Tibial artery (tissue), 4 donors: ENCODE measurements at regions of chr12 and their contacts with region 1.

Region 1: GRCh38 chr12:7583571-7583970 is 80.0 kb upstream of the CD163 start:
- DNase-seq: no peak
- H3K4me3 ChIP-seq: no peak overlapping the region
- H3K27ac ChIP-seq: no peak overlapping the region
- H3K4me1 ChIP-seq: no peaks in the 10 kb centered on the region
- H3K27me3 ChIP-seq: no peaks in the 10 kb centered on the region
- CTCF ChIP-seq: no peak

Region 2: GRCh38 chr12:7542813-7543498 is 40.6 kb before region 1 on chr12:
- intact Hi-C with region 1: no loop called
- DNase-seq: no peak
- H3K4me3 ChIP-seq: no peak overlapping the region
- H3K27ac ChIP-seq: no peak overlapping the region
- H3K4me1 ChIP-seq: no peaks in the 10 kb centered on the region
- H3K27me3 ChIP-seq: no peaks in the 10 kb centered on the region
- CTCF ChIP-seq: no peak

Region 3: DNA sequence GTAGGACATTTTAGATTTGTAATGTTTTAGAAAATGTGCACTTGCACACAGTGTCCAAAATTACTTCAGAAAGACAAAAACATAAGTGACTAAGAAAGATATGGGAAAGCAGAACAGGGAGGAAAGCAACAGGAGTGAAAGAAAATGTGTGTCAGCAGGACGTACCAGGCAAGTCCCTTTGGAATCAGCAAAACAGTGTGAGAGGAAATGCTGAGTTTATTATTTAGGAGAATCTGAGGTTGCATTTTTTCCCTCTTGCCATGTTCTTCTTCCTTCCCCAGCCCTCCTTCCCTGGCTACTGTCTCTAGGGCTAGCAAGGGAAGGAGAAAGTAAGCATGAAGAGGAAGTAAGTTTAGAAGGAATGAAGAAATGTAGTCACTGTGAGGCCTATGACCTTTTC is 12.3 kb before region 1 on chr12:
- intact Hi-C with region 1: loop called (anchors 1 kb)
- DNase-seq: peak in 1 of 2 donors; percentile 23
- H3K4me3 ChIP-seq: no peak overlapping the region
- H3K27ac ChIP-seq: no peak overlapping the region
- H3K4me1 ChIP-seq: no peaks in the 10 kb centered on the region
- H3K27me3 ChIP-seq: no peaks in the 10 kb centered on the region
- CTCF ChIP-seq: no peak